ENCODE measurements at regions of chr18 and their contacts with region 1.

Region 1: DNA sequence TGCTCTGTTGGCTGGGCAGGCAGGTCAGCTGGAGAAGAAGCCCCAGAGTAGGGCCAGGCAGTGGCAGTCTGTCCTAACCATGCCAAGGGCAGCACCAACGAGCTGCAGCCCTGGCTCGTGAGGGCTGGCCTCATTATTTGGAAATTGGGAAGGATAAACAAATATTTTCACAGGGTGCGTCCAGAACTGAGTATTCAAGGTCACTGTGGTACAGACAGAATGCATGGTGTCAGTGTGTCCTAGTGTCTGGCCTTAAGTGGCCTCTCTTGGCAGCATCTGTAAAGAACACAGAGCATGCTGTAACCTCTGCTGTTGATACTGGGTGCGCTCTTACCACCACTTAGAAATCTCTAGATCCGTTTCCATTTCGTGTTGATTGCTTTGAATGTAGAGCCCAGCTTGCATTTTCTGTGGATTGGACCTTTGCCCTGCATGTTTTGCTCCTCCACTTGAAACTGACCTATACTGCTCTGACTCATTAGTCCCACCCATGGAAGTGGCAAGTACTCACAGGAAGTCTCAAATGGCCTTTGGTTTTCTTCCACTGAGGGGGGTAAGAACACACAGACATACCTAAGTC is 88.2 kb downstream of the GREB1L start:
- DNase-seq: no peak
- ATAC-seq: peak; percentile 96

Region 2: GRCh38 chr18:21141668-21142422 is 188.4 kb before region 1 on chr18:
- intact Hi-C with region 1: no loop called
- DNase-seq: no peak
- ATAC-seq: no peak

Region 3: GRCh38 chr18:21242141-21242779 is 88.0 kb before region 1 on chr18 and contains the start of gene GREB1L:
- intact Hi-C with region 1: loop called (anchors 2 kb)
- DNase-seq: no peak
- ATAC-seq: peak; percentile 97
- total RNA-seq, gene GREB1L: 6.4 TPM

Region 4: DNA sequence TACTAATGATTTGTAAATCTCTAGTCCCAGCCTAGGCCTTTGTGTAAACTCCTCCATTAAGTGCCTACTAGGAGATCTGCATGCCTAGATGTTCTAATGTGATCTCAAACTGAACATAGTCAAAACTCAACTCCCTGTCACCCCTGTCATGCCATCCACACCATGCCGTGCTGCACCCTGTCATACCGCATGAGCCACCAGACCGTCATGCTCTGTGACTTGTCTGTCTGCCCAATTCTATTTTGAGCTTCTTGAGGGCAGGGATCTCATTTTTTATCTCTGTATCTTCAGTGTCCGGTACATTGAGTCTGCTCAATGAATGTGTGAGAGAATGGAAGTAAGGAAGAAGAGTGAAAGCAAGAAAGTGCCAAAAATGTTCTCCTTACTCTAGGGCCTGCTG is 52.6 kb before region 1 on chr18:
- intact Hi-C with region 1: loop called (anchors 2 kb)
- DNase-seq: no peak
- ATAC-seq: peak; percentile 89

Region 5: GRCh38 chr18:21289827-21290226 is 40.4 kb before region 1 on chr18:
- intact Hi-C with region 1: no loop called
- DNase-seq: no peak
- ATAC-seq: no peak

Region 6: GRCh38 chr18:21389283-21389682 is 59.1 kb after region 1 on chr18:
- intact Hi-C with region 1: loop called (anchors 10 kb)
- DNase-seq: no peak
- ATAC-seq: no peak

Region 7: DNA sequence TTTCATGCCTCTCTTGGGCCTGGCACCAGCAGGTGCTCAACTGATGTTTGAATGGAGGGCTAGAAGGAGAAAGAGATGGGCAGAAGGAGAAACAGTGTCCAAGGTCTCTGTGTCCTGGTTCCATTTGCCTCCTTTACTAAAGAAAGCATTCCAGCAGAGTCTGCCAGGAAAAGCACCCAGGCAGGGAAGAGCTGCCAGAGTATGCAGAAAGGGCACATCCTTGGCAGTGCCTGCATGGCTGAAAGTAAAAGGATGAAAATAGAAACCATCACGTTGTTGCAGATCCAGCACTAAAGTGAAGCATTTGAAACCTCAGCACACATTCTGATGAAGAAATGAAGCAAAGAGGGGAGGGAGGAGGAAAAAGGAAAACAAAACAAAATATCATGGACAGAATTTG is 128.1 kb after region 1 on chr18:
- intact Hi-C with region 1: loop called (anchors 2 kb)
- DNase-seq: no peak
- ATAC-seq: peak; percentile 88